Mammary epithelial cell (primary cell): ENCODE measurements at regions of chr4 and their contacts with region 1.

Region 1: GRCh38 chr4:98150092-98150761 is 7.0 kb upstream of the STPG2 start:
- DNase-seq: no peak
- H3K4me3 ChIP-seq: no peak overlapping the region
- H3K27ac ChIP-seq: no peak overlapping the region
- H3K4me1 ChIP-seq: no peaks in the 10 kb centered on the region
- H3K27me3 ChIP-seq: no peaks in the 10 kb centered on the region
- CTCF ChIP-seq: peak in 1 of 2 donors; percentile 14

Region 2: DNA sequence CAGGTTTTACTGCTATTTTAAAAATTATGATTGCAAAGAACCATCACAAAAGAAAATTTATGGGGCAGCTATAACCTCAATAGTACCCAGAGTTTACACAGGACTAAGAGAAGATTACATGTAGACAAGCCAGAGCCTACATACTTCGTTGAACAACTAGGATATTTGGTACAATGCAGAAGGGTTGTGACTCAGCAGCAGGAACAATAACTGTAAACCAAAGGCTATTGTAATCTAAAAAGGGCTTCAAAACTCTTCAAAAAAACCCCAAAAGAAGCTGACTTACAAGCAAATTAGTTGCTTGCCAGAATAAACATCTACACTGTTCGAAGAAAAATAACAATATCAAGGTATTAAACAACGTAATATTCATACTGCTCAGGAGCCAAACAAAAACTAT is 625.0 kb before region 1 on chr4:
- CTCF ChIA-PET with region 1: no interaction called
- dilution Hi-C with region 1: no loop called
- in situ Hi-C with region 1: no loop called
- intact Hi-C with region 1: no loop called
- DNase-seq: no peak
- H3K4me3 ChIP-seq: no peak overlapping the region
- H3K27ac ChIP-seq: no peak overlapping the region
- H3K4me1 ChIP-seq: no peaks in the 10 kb centered on the region
- H3K27me3 ChIP-seq: no peaks in the 10 kb centered on the region
- CTCF ChIP-seq: no peak

Region 3: GRCh38 chr4:98745366-98745765 is 595.1 kb after region 1 on chr4:
- CTCF ChIA-PET with region 1: no interaction called
- dilution Hi-C with region 1: no loop called
- in situ Hi-C with region 1: no loop called
- intact Hi-C with region 1: loop called (anchors 10 kb)
- DNase-seq: peak; percentile 32
- H3K4me3 ChIP-seq: no peak overlapping the region
- H3K27ac ChIP-seq: no peak overlapping the region
- H3K4me1 ChIP-seq: no peaks in the 10 kb centered on the region
- H3K27me3 ChIP-seq: no peaks in the 10 kb centered on the region
- CTCF ChIP-seq: peak; percentile 19 to 63